ENCODE measurements at regions of chr10 and their contacts with region 1.

Region 1: GRCh38 chr10:28375399-28376369 is 72.8 kb upstream of the MPP7 start:
- DNase-seq: peak; percentile 85
- H3K4me3 ChIP-seq: no peak overlapping the region
- H3K27ac ChIP-seq: peak overlapping the region; percentile 36
- H3K4me1 ChIP-seq: peaks cover 16% of the 10 kb centered on the region
- H3K27me3 ChIP-seq: no peaks in the 10 kb centered on the region
- CTCF ChIP-seq: no peak

Region 2: DNA sequence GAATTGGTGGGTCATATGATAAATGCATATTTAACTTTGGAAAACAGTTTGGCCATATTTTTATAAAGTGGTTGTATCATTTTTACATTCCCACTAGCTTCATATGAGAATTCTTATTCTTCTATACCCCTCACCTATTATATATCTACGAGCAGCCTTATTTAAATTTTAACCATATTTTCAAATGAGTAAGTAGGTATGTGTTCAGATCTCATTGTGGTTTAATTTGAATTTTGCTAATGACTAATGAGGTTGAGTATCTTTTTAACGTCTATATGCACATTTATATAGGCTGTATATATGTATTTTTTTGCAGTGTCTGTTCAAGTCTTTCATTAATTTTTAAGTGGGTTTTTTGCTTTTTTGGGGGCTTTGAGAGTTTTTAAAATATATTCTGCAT is 857.4 kb before region 1 on chr10:
- CTCF ChIA-PET with region 1: no interaction called
- dilution Hi-C with region 1: no loop called
- in situ Hi-C with region 1: no loop called
- intact Hi-C with region 1: no loop called
- DNase-seq: no peak
- H3K4me3 ChIP-seq: no peak overlapping the region
- H3K27ac ChIP-seq: no peak overlapping the region
- H3K4me1 ChIP-seq: peaks cover 5% of the 10 kb centered on the region
- H3K27me3 ChIP-seq: no peaks in the 10 kb centered on the region
- CTCF ChIP-seq: no peak

Region 3: GRCh38 chr10:28343987-28344897 is 31.4 kb before region 1 on chr10:
- CTCF ChIA-PET with region 1: no interaction called
- dilution Hi-C with region 1: no loop called
- in situ Hi-C with region 1: no loop called
- intact Hi-C with region 1: loop called (anchors 5 kb)
- DNase-seq: no peak
- H3K4me3 ChIP-seq: no peak overlapping the region
- H3K27ac ChIP-seq: no peak overlapping the region
- H3K4me1 ChIP-seq: no peaks in the 10 kb centered on the region
- H3K27me3 ChIP-seq: no peaks in the 10 kb centered on the region
- CTCF ChIP-seq: no peak